Posterior cingulate gyrus (tissue), 11 donors: ENCODE measurements at regions of chr21 and their contacts with region 1.

Region 1: DNA sequence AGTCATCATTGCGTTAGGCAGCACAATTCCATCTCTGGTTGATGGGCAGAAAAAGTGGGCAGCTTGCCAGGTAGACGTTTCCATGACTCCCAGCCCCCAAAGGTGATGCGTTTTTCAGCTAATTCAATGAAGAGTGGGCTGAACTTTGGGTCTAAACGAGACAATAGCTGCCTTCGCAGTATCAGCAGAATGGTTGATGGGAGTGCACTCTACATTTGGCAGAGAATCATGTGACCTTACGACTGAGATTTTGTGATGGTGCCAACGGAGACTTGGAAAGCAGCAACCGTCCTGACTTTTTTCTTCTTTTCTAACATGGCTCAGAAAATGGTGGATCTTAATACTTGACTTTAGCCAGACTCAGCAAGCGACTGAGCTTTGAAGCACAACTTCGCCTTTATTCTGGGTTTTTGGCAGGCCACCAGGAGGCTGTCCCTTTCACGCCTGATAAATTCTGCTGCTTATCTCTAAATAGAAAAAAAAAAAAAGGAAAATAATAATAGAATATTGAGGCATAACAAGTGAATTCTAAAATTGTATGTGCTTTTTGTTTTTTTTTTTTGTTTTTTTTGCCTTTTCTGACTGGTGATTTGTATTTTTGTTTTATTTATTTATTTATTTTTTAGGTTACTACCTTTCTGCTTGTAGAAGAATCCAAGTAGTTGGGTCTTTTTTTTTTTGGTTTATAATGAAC is 804.8 kb downstream of the USP25 start:
- DNase-seq: peak in 8 of 10 donors; percentile 40 to 89 (median 63)

Region 2: DNA sequence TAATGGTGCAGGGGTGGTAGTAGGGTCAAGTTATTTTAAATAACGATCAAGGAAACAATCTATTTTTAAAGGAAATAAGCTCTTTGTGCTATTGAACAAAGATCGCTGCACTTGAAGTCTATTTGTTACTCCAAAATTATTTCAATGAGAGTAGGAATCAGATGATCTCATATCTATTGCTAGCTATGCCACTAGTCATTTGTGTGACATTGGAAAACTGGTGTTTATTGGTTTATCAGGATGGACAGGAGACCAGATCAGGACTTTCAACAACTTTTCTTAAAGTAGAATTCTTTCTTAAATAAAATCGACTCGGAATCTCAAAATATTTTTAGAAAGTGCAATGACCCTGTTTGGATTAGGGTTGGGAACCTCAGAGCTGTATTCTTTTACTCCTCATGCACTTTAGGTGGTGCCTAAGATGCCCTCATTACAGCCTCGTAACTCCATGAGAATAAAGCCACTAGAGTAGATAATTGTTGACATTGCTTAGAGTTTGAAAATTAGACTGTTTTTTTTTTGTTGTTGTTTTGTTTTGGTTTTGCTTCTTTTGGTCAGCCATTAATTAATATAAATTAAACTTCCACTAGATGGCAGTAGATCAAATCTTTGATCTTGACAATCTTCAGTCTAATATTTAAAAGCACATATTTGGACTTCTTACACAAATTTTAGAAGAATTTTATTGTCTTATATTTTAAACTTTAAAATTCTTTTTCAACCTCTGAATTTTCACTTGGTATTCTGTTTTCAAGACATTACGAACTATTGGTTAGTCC is 452.3 kb before region 1 on chr21:
- intact Hi-C with region 1: loop called (anchors 5 kb)
- DNase-seq: no peak

Region 3: GRCh38 chr21:16388911-16389515 is 145.5 kb before region 1 on chr21:
- intact Hi-C with region 1: no loop called
- DNase-seq: no peak

Region 4: GRCh38 chr21:16419188-16419921 is 115.2 kb before region 1 on chr21:
- intact Hi-C with region 1: loop called (anchors 2 kb)
- DNase-seq: peak; percentile 32 to 84 (median 44)

Region 5: GRCh38 chr21:16454399-16454798 is 80.2 kb before region 1 on chr21:
- intact Hi-C with region 1: loop called (anchors 10 kb)
- DNase-seq: no peak

Region 6: DNA sequence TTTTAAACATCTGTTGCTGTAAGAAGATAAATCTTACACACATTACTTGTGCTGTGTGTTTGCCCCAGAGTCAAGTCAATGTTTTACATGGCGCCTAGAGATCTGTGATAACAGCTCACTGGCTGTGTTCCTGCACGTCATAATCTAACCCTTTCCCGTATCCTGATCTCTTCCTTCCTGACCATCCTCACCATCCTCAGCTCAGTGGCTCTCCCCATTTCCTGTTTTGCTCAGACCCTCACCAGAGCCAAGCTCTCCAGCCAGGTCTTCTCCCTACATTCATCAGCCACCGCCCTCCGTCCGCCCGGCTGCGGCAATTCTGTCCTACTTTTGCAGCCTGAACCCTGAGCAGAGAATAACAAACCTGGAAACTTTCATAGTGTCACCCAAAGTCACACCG is 19.9 kb after region 1 on chr21:
- intact Hi-C with region 1: no loop called
- DNase-seq: no peak

Region 7: DNA sequence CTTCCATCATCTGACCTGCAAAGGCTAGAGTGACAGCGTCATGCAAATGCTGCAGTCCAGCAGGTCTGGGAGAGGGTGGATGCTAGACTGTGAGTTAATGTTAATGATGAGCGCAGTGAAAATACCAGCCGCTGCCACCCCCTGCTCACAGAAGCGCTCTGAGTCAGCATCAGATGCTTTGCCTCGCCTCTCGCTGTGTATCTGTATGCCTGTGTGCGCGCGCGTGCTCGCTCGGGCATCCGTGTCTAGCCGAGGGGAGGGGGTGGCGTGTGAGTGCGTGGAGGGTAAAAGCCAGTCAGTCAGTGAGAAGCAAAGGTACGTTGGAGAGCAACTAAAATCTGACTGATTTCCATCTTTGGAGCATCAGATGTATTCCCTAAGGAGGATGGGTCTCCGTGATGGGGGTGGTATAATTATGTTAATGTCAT is 53.9 kb after region 1 on chr21:
- intact Hi-C with region 1: loop called (anchors 2 kb)
- DNase-seq: peak; percentile 83 to 98 (median 90)

Region 8: DNA sequence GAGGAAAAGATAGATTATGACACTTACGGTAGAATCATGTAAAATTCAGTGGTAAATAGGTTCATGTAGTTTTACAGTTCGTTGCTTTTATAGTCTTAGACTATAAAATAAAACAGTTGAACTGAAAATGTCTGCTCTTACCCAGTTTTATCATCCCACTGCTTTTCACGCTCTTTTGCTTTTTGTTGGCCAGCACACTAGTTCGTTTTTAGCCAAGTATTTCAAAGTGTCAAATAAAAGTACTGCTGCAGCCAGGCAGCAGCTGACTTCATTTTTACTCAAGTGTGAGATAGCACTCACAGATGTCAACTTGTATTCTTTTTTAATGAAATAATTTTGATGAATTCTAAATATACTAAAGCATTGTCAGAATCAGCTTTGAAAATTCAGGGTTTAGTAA is 1096.6 kb after region 1 on chr21:
- intact Hi-C with region 1: no loop called
- DNase-seq: no peak